GM12878 (cell line): ENCODE measurements at regions of chr2 and their contacts with region 1.

Region 1: GRCh38 chr2:158179660-158180059 is 78.0 kb downstream of the UPP2 start:
- DNase-seq: no peak
- ATAC-seq: peak; percentile 65
- H3K4me3 ChIP-seq: no peak overlapping the region
- H3K27ac ChIP-seq: no peak overlapping the region
- H3K4me1 ChIP-seq: no peaks in the 10 kb centered on the region
- H3K27me3 ChIP-seq: no peaks in the 10 kb centered on the region; a peak in 1 of 4 replicates
- CTCF ChIP-seq: peak; percentile 14 to 46 (median 37); a peak in 5 of 6 replicates
- EP300 ChIP-seq: no peak
- POLR2A ChIP-seq: no peak
- RAD21 ChIP-seq: peak; percentile 69

Region 2: GRCh38 chr2:158619496-158619895 is 439.8 kb after region 1 on chr2:
- CTCF ChIA-PET with region 1: interaction called, 11 read pairs
- POLR2A ChIA-PET with region 1: no interaction called
- RAD21 ChIA-PET with region 1: no interaction called
- SMC1A ChIA-PET with region 1: interaction called, 6 read pairs
- in situ Hi-C with region 1: no loop called
- intact Hi-C with region 1: no loop called
- DNase-seq: no peak
- ATAC-seq: no peak; the same call in 2 of the 3 replicates
- H3K4me3 ChIP-seq: no peak overlapping the region
- H3K27ac ChIP-seq: no peak overlapping the region
- H3K4me1 ChIP-seq: no peaks in the 10 kb centered on the region
- H3K27me3 ChIP-seq: no peaks in the 10 kb centered on the region
- CTCF ChIP-seq: no peak
- EP300 ChIP-seq: no peak
- POLR2A ChIP-seq: no peak
- RAD21 ChIP-seq: no peak